Dendritic cell treated with granulocyte-macrophage colony-stimulating factor and Interleukin-4, amounts not matched to agents 40 ng/mL and 50 ng/mL, for 4 days (primary cell): ENCODE measurements at regions of chr7 and their contacts with region 1.

Region 1: DNA sequence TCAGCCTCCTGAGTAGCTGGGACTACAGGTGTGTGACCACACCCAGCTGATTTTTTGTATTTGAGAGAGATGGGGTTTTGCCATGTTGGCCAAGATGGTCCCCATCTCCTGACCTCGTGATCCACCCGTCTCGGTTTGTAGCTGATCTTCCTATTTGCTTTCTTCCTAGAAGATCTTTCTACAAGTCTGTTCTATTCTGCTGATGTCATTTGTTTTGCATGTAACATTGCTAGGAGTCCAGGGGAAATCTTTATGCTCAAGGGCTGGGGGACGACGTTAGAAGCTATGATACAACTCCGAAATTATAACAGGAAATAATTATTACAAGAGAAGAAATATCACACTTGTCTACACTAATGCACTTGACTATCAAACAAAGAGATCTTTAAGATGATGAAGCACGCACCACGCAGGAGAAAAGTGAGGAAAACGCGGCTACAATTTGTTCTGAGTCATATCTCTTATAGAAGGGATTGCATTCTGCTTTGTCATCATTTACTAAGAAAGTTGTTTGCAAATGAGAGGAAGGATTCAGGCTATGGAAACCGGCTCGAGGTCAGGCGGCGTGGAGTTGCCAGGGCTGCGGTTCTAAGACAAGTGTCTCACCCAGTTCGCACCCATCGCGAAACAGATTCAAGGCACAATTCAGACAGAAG is 103.0 kb upstream of the CARD11 start:
- H3K4me3 Mint-ChIP-seq: no peak overlapping the region
- H3K27ac Mint-ChIP-seq: no peak overlapping the region
- H3K4me1 Mint-ChIP-seq: peaks cover 10% of the 10 kb centered on the region
- H3K27me3 Mint-ChIP-seq: peaks cover 59% of the 10 kb centered on the region

Region 2: GRCh38 chr7:3078514-3078913 is 68.2 kb before region 1 on chr7:
- intact Hi-C with region 1: no loop called
- H3K4me3 Mint-ChIP-seq: no peak overlapping the region
- H3K27ac Mint-ChIP-seq: no peak overlapping the region
- H3K4me1 Mint-ChIP-seq: no peaks in the 10 kb centered on the region
- H3K27me3 Mint-ChIP-seq: peaks cover 7% of the 10 kb centered on the region

Region 3: GRCh38 chr7:3092468-3092867 is 54.2 kb before region 1 on chr7:
- intact Hi-C with region 1: loop called (anchors 10 kb)
- H3K4me3 Mint-ChIP-seq: no peak overlapping the region
- H3K27ac Mint-ChIP-seq: peak overlapping the region; percentile 39
- H3K4me1 Mint-ChIP-seq: peaks cover 36% of the 10 kb centered on the region
- H3K27me3 Mint-ChIP-seq: peaks cover 13% of the 10 kb centered on the region